Activated CD4-positive, alpha-beta memory T cell treated with anti-CD3 and anti-CD28 coated beads for 36 hours (primary cell): ENCODE measurements at regions of chr12 and their contacts with region 1.

Region 1: GRCh38 chr12:12474931-12475795 is 87.5 kb downstream of the DUSP16 start:
- DNase-seq: peak; percentile 86
- H3K4me3 Mint-ChIP-seq: peak overlapping the region; percentile 63
- H3K27ac Mint-ChIP-seq: peak overlapping the region; percentile 99
- H3K4me1 Mint-ChIP-seq: peaks cover 82% of the 10 kb centered on the region
- H3K27me3 Mint-ChIP-seq: no peaks in the 10 kb centered on the region

Region 2: GRCh38 chr12:12171991-12172521 is 303.1 kb before region 1 on chr12:
- CTCF ChIA-PET with region 1: no interaction called
- POLR2A ChIA-PET with region 1: no interaction called
- intact Hi-C with region 1: no loop called
- DNase-seq: peak; percentile 49
- H3K4me3 Mint-ChIP-seq: no peak overlapping the region
- H3K27ac Mint-ChIP-seq: no peak overlapping the region
- H3K4me1 Mint-ChIP-seq: peaks cover 12% of the 10 kb centered on the region
- H3K27me3 Mint-ChIP-seq: peaks cover 11% of the 10 kb centered on the region

Region 3: GRCh38 chr12:12384571-12385340 is 90.4 kb before region 1 on chr12:
- CTCF ChIA-PET with region 1: interaction called, 51 read pairs
- POLR2A ChIA-PET with region 1: interaction called, 11 read pairs
- intact Hi-C with region 1: loop called (anchors 1 kb)
- DNase-seq: peak; percentile 80
- H3K4me3 Mint-ChIP-seq: peak overlapping the region; percentile 48
- H3K27ac Mint-ChIP-seq: peak overlapping the region; percentile 93
- H3K4me1 Mint-ChIP-seq: peaks cover 68% of the 10 kb centered on the region
- H3K27me3 Mint-ChIP-seq: no peaks in the 10 kb centered on the region

Region 4: DNA sequence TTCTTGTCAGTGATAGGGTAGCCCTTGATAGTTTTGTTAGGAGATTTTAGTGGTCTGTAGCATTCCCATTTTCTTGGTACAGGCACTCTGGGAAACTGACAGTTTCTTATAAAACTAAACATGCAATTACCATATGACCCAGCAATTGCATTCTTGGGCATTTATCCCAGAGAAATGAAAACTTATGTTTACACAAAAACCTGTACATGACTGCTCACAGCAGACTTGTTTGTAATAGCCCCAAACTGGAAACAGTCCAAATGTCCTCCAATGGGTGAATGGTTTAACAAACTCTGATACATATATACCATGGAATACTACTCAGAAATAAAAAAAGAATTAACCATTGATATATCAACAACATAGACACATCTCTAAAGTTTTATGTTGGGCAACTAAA is 42.8 kb before region 1 on chr12:
- CTCF ChIA-PET with region 1: interaction called, 5 read pairs
- POLR2A ChIA-PET with region 1: interaction called, 12 read pairs
- intact Hi-C with region 1: no loop called
- DNase-seq: no peak
- H3K4me3 Mint-ChIP-seq: no peak overlapping the region
- H3K27ac Mint-ChIP-seq: peak overlapping the region; percentile 57
- H3K4me1 Mint-ChIP-seq: peaks cover 73% of the 10 kb centered on the region
- H3K27me3 Mint-ChIP-seq: no peaks in the 10 kb centered on the region

Region 5: GRCh38 chr12:12456637-12457036 is 18.5 kb before region 1 on chr12:
- CTCF ChIA-PET with region 1: interaction called, 27 read pairs
- POLR2A ChIA-PET with region 1: interaction called, 48 read pairs
- intact Hi-C with region 1: loop called (anchors 1 kb)
- DNase-seq: no peak
- H3K4me3 Mint-ChIP-seq: peak overlapping the region; percentile 47
- H3K27ac Mint-ChIP-seq: peak overlapping the region; percentile 93
- H3K4me1 Mint-ChIP-seq: peaks cover 63% of the 10 kb centered on the region
- H3K27me3 Mint-ChIP-seq: no peaks in the 10 kb centered on the region

Region 6: GRCh38 chr12:12486661-12487240 is 11.6 kb after region 1 on chr12:
- CTCF ChIA-PET with region 1: interaction called, 7 read pairs
- POLR2A ChIA-PET with region 1: interaction called, 71 read pairs
- intact Hi-C with region 1: loop called (anchors 1 kb)
- DNase-seq: peak; percentile 59
- H3K4me3 Mint-ChIP-seq: peak overlapping the region; percentile 6
- H3K27ac Mint-ChIP-seq: peak overlapping the region; percentile 99
- H3K4me1 Mint-ChIP-seq: peaks cover 56% of the 10 kb centered on the region
- H3K27me3 Mint-ChIP-seq: no peaks in the 10 kb centered on the region

Region 7: DNA sequence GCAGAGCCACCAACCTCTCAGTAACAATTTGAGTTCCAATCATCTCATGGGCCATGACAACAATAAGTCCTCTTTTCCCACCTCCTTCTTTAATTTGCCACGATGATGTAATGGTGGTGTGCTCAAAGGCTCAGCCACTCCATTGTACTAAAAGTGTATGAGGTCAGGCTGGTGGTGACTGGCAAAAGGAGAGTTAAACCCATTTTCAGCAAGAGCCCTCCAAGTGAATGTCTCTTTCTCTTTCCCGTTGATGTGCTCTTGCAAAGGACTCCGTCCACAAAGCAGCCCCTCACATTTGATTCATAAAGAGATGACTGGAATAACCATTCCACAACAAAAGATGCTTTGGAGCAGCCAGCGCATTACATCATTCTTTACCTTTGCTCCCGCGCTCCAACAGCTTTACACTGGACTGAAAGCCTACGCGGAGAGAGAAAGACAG is 45.9 kb after region 1 on chr12:
- CTCF ChIA-PET with region 1: no interaction called
- POLR2A ChIA-PET with region 1: no interaction called
- intact Hi-C with region 1: no loop called
- DNase-seq: no peak
- H3K4me3 Mint-ChIP-seq: no peak overlapping the region
- H3K27ac Mint-ChIP-seq: no peak overlapping the region
- H3K4me1 Mint-ChIP-seq: peaks cover 47% of the 10 kb centered on the region
- H3K27me3 Mint-ChIP-seq: no peaks in the 10 kb centered on the region

Region 8: GRCh38 chr12:12620730-12621315 is 145.7 kb after region 1 on chr12:
- CTCF ChIA-PET with region 1: no interaction called
- POLR2A ChIA-PET with region 1: no interaction called
- intact Hi-C with region 1: no loop called
- DNase-seq: no peak
- H3K4me3 Mint-ChIP-seq: no peak overlapping the region
- H3K27ac Mint-ChIP-seq: peak overlapping the region; percentile 14
- H3K4me1 Mint-ChIP-seq: peaks cover 82% of the 10 kb centered on the region
- H3K27me3 Mint-ChIP-seq: no peaks in the 10 kb centered on the region

Region 9: GRCh38 chr12:12696562-12697383 is 221.6 kb after region 1 on chr12:
- CTCF ChIA-PET with region 1: no interaction called
- POLR2A ChIA-PET with region 1: interaction called, 5 read pairs
- intact Hi-C with region 1: loop called (anchors 5 kb)
- DNase-seq: peak; percentile 92
- H3K4me3 Mint-ChIP-seq: peak overlapping the region; percentile 92
- H3K27ac Mint-ChIP-seq: peak overlapping the region; percentile 98
- H3K4me1 Mint-ChIP-seq: peaks cover 65% of the 10 kb centered on the region
- H3K27me3 Mint-ChIP-seq: no peaks in the 10 kb centered on the region